ENCODE measurements at regions of chr13 and their contacts with region 1.

Region 1: GRCh38 chr13:60108589-60108988 is 55.1 kb downstream of the DIAPH3 start:
- DNase-seq: no peak
- H3K4me3 ChIP-seq: no peak overlapping the region
- H3K27ac ChIP-seq: no peak overlapping the region
- H3K4me1 ChIP-seq: no peaks in the 10 kb centered on the region
- H3K27me3 ChIP-seq: no peaks in the 10 kb centered on the region
- CTCF ChIP-seq: no peak
- POLR2A ChIP-seq: no peak

Region 2: GRCh38 chr13:60155978-60156377 is 47.4 kb after region 1 on chr13:
- intact Hi-C with region 1: loop called (anchors 2 kb)
- DNase-seq: no peak
- H3K4me3 ChIP-seq: no peak overlapping the region
- H3K27ac ChIP-seq: no peak overlapping the region
- H3K4me1 ChIP-seq: no peaks in the 10 kb centered on the region
- H3K27me3 ChIP-seq: no peaks in the 10 kb centered on the region
- CTCF ChIP-seq: no peak
- POLR2A ChIP-seq: no peak